HepG2 (cell line): ENCODE measurements at regions of chr17 and their contacts with region 1.

Region 1: GRCh38 chr17:17568749-17569195 is 22.7 kb downstream of the PEMT start:
- DNase-seq: peak; percentile 54
- ATAC-seq: peak; percentile 38
- H3K4me3 ChIP-seq: no peak overlapping the region
- H3K27ac ChIP-seq: no peak overlapping the region
- H3K4me1 ChIP-seq: peaks cover 48% of the 10 kb centered on the region
- H3K27me3 ChIP-seq: no peaks in the 10 kb centered on the region
- CTCF ChIP-seq: peak; percentile 97
- EP300 ChIP-seq: no peak
- POLR2A ChIP-seq: no peak
- RAD21 ChIP-seq: peak; percentile 95

Region 2: DNA sequence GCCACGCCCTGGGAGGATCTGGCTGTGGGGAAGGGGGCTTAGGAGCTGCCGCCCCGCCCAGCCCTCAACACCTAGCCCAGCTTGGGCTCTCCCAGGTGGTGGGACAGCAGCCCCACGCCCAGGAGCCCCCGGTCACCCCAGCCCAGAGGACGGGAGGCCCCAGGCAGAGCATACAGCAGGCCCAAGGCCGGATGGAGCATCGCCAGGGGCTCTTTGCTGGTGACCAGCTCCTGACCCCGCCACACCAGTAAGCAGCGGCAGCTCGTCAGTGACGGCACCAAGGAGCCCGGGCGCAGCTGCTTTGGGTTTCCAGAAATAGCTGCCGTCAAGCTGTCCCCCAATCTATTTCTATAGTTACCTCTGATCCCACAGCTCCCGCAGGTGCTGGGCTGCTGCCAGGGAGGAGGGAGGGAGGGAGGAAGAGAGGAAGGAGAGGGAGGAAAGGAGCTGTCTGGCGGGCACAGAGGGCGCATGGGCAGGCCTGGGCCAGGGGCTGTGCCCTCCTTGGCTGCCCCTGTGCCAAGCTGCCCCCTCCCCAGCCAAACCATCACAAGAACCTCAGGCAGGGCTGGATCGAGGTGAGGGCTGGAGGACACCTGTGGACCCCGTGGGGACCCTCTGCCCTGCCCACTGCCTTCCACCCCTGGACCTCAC is 61.8 kb before region 1 on chr17:
- CTCF ChIA-PET with region 1: no interaction called
- POLR2A ChIA-PET with region 1: interaction called, 4 read pairs
- in situ Hi-C with region 1: loop called (anchors 5 kb)
- intact Hi-C with region 1: no loop called
- DNase-seq: no peak
- ATAC-seq: no peak
- H3K4me3 ChIP-seq: no peak overlapping the region
- H3K27ac ChIP-seq: no peak overlapping the region
- H3K4me1 ChIP-seq: no peaks in the 10 kb centered on the region
- H3K27me3 ChIP-seq: peaks cover 0 to 12% of the 10 kb centered on the region in 2 experiments; a peak in 2 of 5 replicates
- CTCF ChIP-seq: no peak
- EP300 ChIP-seq: no peak
- POLR2A ChIP-seq: no peak
- RAD21 ChIP-seq: no peak

Region 3: GRCh38 chr17:17535957-17536356 is 32.8 kb before region 1 on chr17:
- CTCF ChIA-PET with region 1: interaction called, 3 read pairs
- POLR2A ChIA-PET with region 1: interaction called, 20 read pairs
- in situ Hi-C with region 1: no loop called
- intact Hi-C with region 1: loop called (anchors 5 kb)
- DNase-seq: no peak
- ATAC-seq: no peak
- H3K4me3 ChIP-seq: no peak overlapping the region
- H3K27ac ChIP-seq: no peak overlapping the region
- H3K4me1 ChIP-seq: peaks cover 73% of the 10 kb centered on the region
- H3K27me3 ChIP-seq: no peaks in the 10 kb centered on the region
- CTCF ChIP-seq: no peak
- EP300 ChIP-seq: no peak
- POLR2A ChIP-seq: no peak
- RAD21 ChIP-seq: no peak

Region 4: DNA sequence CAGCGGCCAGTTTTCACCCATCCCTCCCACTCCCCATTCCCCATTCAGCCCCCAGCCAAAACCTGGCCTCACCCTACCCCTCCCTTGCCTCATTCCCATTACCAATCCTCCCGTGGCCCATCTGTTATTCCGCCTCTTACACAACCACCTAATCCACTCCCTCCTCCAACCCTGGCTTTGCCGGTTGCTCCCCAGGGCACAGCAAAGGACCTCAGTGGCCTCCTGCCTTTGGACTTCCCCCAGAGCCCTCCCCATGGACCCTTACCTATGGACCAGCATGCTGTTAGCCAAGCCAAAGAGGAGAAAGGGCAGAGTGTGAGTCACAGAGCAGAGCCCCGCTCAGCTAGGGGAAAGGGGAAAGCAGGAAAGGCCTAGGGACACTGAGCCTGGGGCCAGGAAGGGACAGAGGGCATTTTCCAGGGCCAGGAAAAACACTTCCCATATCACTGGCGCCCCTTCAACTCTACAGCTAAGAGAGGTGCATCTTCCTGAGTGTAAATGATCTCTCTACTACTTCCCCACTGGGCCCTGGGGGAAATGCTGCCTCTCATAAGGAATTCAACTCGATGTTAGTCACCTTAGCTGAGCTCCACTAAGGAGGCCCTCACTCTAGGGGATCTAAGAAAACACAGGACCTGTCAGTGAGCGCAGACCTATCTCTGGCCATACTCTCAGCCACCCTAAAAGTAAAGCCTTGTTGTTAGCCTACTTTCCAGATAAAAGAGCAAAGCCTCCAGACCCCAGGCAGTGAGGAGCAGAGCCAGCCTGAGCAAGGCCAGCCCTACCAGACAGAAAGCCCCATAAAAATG is 12.1 kb after region 1 on chr17:
- CTCF ChIA-PET with region 1: no interaction called
- POLR2A ChIA-PET with region 1: interaction called, 33 read pairs
- in situ Hi-C with region 1: no loop called
- intact Hi-C with region 1: no loop called
- DNase-seq: peak; percentile 77
- ATAC-seq: peak; percentile 96
- H3K4me3 ChIP-seq: peak overlapping the region in 1 of 3 experiments; percentile 55; a peak in 2 of 6 replicates
- H3K27ac ChIP-seq: peak overlapping the region; percentile 94
- H3K4me1 ChIP-seq: peaks cover 59% of the 10 kb centered on the region
- H3K27me3 ChIP-seq: no peaks in the 10 kb centered on the region
- CTCF ChIP-seq: peak; percentile 32; the same call in 1 of the 2 replicates
- EP300 ChIP-seq: peak in 1 of 2 experiments; percentile 74; a peak in 2 of 4 replicates
- POLR2A ChIP-seq: peak; percentile 51 to 59; a peak in 2 of 4 replicates
- RAD21 ChIP-seq: no peak

Region 5: DNA sequence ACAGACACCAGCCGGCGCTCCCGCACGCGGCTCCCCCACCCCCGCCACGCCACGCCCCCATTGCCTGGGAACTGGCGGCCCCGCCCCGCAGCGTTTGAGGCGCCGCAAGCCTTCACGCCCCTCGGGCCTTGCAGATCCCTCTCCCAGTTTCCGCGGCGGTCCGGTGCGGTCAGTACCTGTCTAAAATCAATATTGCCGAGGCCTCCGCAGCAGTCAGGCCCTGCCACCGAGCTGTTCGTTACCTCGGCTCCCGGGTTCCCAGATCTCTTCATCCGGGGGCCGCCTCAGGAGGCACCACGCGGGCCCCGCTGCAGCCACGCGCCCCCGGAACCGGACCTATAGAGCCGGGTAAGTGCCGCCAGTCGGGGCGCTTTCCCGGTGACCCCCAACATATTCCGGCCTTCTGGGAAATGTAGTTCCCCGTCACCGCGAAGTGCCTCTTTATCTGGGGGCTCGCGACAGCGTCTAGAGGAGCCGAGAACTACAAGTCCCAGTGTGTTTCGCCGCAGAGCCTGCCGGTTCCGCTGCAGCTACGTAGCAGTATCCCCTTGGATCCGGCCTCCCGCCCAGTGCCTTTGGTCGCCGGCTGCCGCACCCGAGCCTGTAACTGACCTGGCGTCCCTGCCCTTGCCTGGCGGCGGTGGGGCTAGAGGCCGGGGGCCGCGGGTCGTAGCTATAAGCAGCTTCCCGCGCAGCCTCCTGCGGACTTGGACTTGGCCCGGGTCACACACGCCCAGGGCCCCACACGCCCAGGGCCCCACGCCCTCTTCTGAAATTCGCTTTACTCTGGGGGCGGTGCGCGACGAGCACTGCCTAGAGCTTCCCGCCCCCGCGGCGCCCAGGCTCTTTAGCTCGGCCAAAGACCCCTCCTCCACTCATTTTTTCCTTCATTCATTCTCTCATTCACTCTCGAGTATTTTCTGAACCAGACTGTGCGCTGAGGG is 22.9 kb after region 1 on chr17 and contains the start of gene PEMT:
- CTCF ChIA-PET with region 1: no interaction called
- POLR2A ChIA-PET with region 1: interaction called, 46 read pairs
- in situ Hi-C with region 1: no loop called
- intact Hi-C with region 1: no loop called
- DNase-seq: peak; percentile 97
- ATAC-seq: peak; percentile 96
- H3K4me3 ChIP-seq: peak within 1 kb of the TSS; percentile 76 to 94 (median 94)
- H3K27ac ChIP-seq: peak within 1 kb of the TSS; percentile 89
- H3K4me1 ChIP-seq: peaks cover 26% of the 10 kb centered on the region
- H3K27me3 ChIP-seq: no peaks in the 10 kb centered on the region; a peak in 1 of 5 replicates
- CTCF ChIP-seq: no peak; the same call in 1 of the 2 replicates
- EP300 ChIP-seq: no peak
- POLR2A ChIP-seq: peak; percentile 68 to 84
- RAD21 ChIP-seq: peak; percentile 40
- total RNA-seq, gene PEMT: 16.4 and 31.7 TPM in 2 replicates

Region 6: DNA sequence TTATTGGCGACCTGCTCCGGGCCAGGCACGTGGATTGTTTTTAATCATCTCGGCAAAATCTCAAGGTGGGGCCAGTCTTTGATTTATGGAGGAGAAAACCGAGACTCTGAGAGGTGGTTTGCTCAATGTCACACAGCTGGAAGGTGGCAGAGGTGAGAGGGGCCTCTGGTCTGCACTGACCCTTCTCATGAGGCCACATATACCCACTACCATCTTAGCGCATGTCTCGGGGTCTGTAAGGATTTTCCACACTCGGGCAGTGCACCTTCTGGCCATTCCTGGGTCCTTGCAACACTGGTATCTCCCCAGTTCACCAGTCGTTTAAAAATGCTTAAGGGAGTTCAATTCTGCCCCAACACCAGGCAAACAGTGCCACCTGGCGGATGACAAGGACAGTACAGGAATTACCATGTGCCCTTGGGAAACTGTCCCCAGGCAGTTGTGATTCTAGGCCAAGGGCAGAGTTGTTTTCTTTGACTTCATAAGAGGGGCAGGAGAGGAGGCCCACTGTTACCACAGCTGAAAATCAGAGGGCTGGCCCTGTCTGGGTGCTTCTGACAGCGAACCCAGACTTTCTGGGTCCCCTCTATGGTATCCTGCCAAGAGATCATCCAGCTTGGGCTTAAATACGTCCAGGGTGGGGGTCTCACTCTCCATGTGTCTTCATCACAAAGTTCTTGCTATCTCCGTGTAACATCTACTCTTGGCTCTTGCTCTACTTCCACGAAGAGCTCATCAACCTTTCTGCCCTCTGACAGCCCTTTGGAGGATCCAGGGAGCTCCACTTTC is 73.0 kb after region 1 on chr17:
- CTCF ChIA-PET with region 1: no interaction called
- POLR2A ChIA-PET with region 1: no interaction called
- in situ Hi-C with region 1: no loop called
- intact Hi-C with region 1: loop called (anchors 2 kb)
- DNase-seq: peak; percentile 74
- ATAC-seq: peak; percentile 88
- H3K4me3 ChIP-seq: no peak overlapping the region
- H3K27ac ChIP-seq: no peak overlapping the region
- H3K4me1 ChIP-seq: peaks cover 13% of the 10 kb centered on the region
- H3K27me3 ChIP-seq: peaks cover 0 to 5% of the 10 kb centered on the region in 2 experiments; a peak in 2 of 5 replicates
- CTCF ChIP-seq: peak; percentile 96
- EP300 ChIP-seq: no peak
- POLR2A ChIP-seq: no peak
- RAD21 ChIP-seq: peak; percentile 89